ENCODE measurements at regions of chr1 and their contacts with region 1.

Region 1: GRCh38 chr1:183580281-183580682 is 10.0 kb downstream of the NCF2 start:
- DNase-seq: peak in 4 of 14 experiments; percentile 32 to 50 (median 44)
- ATAC-seq: peak; percentile 56
- H3K4me3 ChIP-seq: no peak overlapping the region
- H3K4me3 Mint-ChIP-seq: peak overlapping the region; percentile 59
- H3K27ac ChIP-seq: no peak overlapping the region
- H3K27ac Mint-ChIP-seq: peak overlapping the region; percentile 22
- H3K4me1 ChIP-seq: peaks cover 9% of the 10 kb centered on the region
- H3K4me1 Mint-ChIP-seq: peaks cover 10% of the 10 kb centered on the region
- H3K27me3 ChIP-seq: no peaks in the 10 kb centered on the region
- H3K27me3 Mint-ChIP-seq: no peaks in the 10 kb centered on the region
- CTCF ChIP-seq: peak; percentile 8

Region 2: DNA sequence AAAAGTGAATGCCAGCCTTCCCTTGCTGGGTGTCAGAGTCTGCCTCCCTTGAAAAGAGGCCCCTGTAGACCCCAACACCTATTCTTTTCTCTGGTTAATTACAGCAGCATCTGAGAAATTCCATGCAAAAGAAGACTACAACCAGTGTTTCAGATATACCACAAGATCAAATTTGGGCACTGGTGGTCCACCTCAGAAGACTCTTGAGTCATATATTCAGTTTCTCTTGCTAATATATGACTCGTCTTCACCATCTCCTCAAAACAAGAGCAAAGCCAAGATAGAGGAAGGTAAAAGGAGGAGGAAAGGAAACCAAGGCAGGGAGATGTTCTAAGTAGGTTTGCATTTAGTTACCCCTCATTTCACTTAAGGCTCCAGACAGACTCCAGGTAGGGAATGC is 1778.7 kb before region 1 on chr1:
- CTCF ChIA-PET with region 1: no interaction called
- POLR2A ChIA-PET with region 1: no interaction called
- intact Hi-C with region 1: loop called in 1 of 2 experiments (anchors 5 kb)
- DNase-seq: no peak
- ATAC-seq: no peak
- H3K4me3 ChIP-seq: no peak overlapping the region
- H3K4me3 Mint-ChIP-seq: no peak overlapping the region
- H3K27ac ChIP-seq: no peak overlapping the region
- H3K27ac Mint-ChIP-seq: no peak overlapping the region
- H3K4me1 ChIP-seq: no peaks in the 10 kb centered on the region
- H3K4me1 Mint-ChIP-seq: no peaks in the 10 kb centered on the region
- H3K27me3 ChIP-seq: peaks cover 4% of the 10 kb centered on the region in 2 experiments
- H3K27me3 Mint-ChIP-seq: peaks cover 25% of the 10 kb centered on the region
- CTCF ChIP-seq: no peak

Region 3: GRCh38 chr1:183622884-183623785 is 42.9 kb after region 1 on chr1:
- CTCF ChIA-PET with region 1: no interaction called
- POLR2A ChIA-PET with region 1: no interaction called
- intact Hi-C with region 1: no loop called
- DNase-seq: peak; percentile 18 to 76 (median 36)
- ATAC-seq: peak; percentile 99
- H3K4me3 ChIP-seq: no peak overlapping the region
- H3K4me3 Mint-ChIP-seq: no peak overlapping the region
- H3K27ac ChIP-seq: no peak overlapping the region
- H3K27ac Mint-ChIP-seq: peak overlapping the region; percentile 60
- H3K4me1 ChIP-seq: no peaks in the 10 kb centered on the region
- H3K4me1 Mint-ChIP-seq: peaks cover 25% of the 10 kb centered on the region
- H3K27me3 ChIP-seq: no peaks in the 10 kb centered on the region
- H3K27me3 Mint-ChIP-seq: no peaks in the 10 kb centered on the region
- CTCF ChIP-seq: peak; percentile 64